ENCODE measurements at regions of chr2 and their contacts with region 1.

Region 1: DNA sequence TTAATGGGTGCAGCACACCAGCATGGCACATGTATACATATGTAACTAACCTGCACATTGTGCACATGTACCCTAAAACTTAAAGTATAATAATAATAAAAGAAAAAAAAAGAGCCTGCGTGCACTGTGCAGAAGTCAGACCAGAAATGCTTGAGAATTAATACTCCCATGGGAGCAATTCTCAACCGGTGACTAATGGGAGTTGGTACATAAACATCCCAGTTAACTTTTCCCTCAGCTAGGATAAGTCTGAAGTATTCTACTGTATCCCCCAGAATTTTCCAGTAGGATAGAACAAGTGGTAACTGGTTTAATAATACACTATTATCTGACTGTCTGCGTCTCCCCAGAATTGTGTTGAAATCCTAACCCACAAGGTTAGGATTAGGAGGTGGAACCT is 113.6 kb upstream of the COL5A2 start:
- DNase-seq: no peak
- ATAC-seq: no peak
- H3K4me3 ChIP-seq: no peak overlapping the region
- H3K27ac ChIP-seq: no peak overlapping the region
- H3K4me1 ChIP-seq: no peaks in the 10 kb centered on the region
- H3K27me3 ChIP-seq: no peaks in the 10 kb centered on the region
- CTCF ChIP-seq: no peak

Region 2: DNA sequence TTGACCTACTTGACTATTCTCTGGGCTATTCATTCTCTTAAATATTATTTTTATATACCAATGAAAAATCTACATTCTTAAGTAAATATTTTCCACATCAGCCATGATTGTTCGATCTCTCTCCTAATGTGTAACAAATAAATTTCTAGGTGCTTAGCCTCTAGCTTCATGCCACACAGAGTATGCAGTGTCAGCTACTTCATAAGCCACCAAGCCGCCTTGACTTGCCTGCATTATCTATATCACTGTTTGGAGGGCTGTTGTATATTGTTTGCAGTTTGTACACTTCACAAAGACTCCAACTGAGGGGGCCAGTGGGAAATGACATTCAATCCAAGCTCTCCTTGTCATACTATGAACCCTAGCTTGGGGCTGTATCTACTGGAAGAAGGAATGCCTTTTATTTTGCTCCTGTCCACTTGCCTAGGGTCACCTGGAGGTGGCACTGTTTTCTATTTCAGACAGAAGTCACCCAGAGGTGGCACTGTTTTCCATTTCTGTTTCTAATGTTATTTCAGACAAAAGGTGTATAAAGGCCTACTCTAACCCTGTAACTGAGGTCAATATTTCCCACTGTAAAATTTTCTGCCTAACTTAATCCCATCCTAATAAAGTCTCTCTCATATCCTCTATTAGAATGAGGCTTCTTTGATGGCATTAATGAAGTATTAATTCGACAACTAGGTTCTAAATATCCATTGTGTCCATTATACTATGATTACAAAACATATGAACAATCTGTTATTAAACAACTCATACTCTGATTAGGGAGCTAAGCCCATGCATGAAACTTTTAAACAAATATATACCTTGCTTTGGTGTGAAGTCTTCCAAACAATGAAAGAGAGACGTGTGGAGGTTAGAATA is 150.0 kb before region 1 on chr2:
- CTCF ChIA-PET with region 1: interaction called, 11 read pairs
- POLR2A ChIA-PET with region 1: no interaction called
- in situ Hi-C with region 1: no loop called
- intact Hi-C with region 1: no loop called
- DNase-seq: peak; percentile 58
- ATAC-seq: peak; percentile 88
- H3K4me3 ChIP-seq: no peak overlapping the region
- H3K27ac ChIP-seq: peak overlapping the region; percentile 79
- H3K4me1 ChIP-seq: peaks cover 32% of the 10 kb centered on the region
- H3K27me3 ChIP-seq: no peaks in the 10 kb centered on the region
- CTCF ChIP-seq: peak; percentile 87

Region 3: DNA sequence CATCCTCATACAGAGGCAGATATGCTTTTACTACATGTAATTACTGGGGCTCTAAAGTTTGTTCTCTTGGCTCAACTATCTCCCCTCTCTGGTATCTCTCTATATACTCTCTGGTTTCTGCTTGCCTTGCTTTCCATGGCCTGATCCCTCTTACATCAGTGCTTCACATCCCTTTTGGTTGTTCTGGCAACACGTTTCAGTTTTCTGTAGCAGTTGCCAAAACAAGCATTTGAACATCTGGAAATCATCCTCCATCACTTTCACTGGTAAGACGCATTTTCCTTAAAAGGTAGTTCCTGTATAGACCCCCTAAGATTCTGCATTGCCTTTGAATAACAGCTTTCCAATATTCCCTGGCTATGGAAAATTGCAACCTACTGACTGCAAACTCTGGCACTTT is 139.5 kb before region 1 on chr2:
- CTCF ChIA-PET with region 1: no interaction called
- POLR2A ChIA-PET with region 1: no interaction called
- in situ Hi-C with region 1: no loop called
- intact Hi-C with region 1: no loop called
- DNase-seq: no peak
- ATAC-seq: no peak
- H3K4me3 ChIP-seq: no peak overlapping the region
- H3K27ac ChIP-seq: peak overlapping the region; percentile 89
- H3K4me1 ChIP-seq: peaks cover 58% of the 10 kb centered on the region
- H3K27me3 ChIP-seq: no peaks in the 10 kb centered on the region
- CTCF ChIP-seq: no peak

Region 4: GRCh38 chr2:189937691-189938090 is 644.5 kb after region 1 on chr2:
- CTCF ChIA-PET with region 1: no interaction called
- POLR2A ChIA-PET with region 1: no interaction called
- in situ Hi-C with region 1: no loop called
- intact Hi-C with region 1: no loop called
- DNase-seq: no peak
- ATAC-seq: no peak
- H3K4me3 ChIP-seq: no peak overlapping the region
- H3K27ac ChIP-seq: no peak overlapping the region
- H3K4me1 ChIP-seq: no peaks in the 10 kb centered on the region
- H3K27me3 ChIP-seq: no peaks in the 10 kb centered on the region
- CTCF ChIP-seq: no peak

Measured in Panc1 (cell line).